GM13976 (cell line): ENCODE measurements at regions of chr11 and their contacts with region 1.

Region 1: DNA sequence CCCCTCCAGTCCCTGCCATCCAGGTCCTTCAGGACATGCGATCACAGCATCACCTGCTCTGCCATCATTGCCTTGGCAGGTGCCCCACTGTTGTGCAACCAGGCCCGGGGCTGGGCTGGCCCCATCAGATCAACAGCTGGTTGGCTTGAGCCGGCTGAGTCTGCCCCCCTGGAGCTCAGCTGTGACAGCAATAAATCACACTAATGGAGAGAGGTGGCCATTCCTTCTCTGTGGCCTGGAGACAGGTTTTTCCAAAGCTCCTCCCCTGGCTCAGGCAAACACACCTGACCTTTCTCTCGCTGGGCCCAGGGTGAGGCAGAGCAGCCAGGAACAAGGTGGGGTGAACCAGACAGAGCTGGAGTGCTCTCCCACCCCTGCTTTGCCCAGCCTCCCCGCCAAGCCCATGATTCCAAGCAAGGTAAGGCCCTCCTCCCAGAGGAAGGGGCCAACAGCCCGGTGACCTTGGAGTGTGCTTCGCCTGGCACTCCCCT is 8.9 kb upstream of the FXYD2 start:
- DNase-seq: no peak
- CTCF ChIP-seq: no peak

Region 2: DNA sequence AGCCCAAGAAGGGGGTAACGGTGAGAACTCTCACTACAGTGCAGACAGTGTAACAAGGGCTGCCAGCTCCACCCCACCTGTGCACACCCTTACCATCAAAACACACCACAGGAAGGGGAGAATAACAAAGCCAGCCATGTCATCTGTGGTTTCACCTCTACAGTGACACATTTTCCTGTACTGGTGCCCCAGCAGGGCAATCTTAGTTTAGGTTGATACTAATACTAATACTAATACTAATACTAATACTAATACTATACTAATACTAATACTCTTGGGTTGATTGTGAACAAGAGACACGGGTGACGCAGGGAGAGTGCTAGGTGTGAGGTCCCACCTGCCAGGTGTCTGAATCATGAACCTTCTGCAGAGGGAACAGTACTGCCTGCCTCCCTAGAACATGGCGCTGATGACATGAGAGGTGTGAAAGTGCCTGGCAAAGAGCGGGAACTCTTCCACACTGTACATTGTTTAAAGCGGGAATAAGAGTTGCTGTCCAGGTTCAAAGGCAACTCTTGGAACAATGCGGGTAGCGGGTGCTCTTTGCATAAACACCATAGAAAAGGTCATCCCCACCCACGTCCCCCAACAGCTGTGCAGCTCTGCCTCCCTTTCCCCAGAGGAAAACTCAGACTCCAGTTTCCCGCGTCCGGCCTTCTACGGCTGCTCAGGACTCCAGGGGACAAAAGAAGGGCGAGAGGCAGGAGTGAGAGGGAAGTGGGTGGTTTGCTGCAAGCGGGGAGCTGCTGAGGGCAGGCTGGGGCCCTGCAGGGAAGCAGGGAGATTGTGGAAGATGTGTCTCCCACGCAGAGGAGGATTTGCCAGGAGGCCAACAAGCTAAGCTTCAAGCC is 218.4 kb after region 1 on chr11:
- in situ Hi-C with region 1: loop called (anchors 10 kb)
- DNase-seq: no peak
- CTCF ChIP-seq: no peak

Region 3: DNA sequence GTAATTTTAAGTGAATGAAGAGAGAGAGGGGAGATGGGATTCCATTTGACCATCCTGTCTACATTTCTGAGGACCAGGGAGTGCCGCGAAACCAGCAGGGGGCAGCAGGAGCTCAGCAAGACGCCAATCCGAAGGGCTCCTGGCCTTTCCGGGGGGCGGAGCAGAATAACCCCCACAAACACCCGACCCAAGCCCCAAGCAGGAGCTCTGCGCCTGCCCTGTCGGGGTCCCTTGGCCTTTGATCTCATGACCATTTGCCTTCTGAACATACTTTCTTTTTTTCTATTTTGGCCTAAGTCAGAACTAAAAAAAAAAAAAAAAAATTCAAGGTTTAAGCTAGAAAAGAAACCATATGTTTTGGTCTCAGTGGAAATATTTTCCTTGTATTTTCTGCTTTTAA is 364.9 kb after region 1 on chr11:
- in situ Hi-C with region 1: no loop called
- DNase-seq: peak; percentile 81
- CTCF ChIP-seq: peak; percentile 82